Left cardiac atrium (tissue), 4 donors: ENCODE measurements at regions of chr7 and their contacts with region 1.

Region 1: DNA sequence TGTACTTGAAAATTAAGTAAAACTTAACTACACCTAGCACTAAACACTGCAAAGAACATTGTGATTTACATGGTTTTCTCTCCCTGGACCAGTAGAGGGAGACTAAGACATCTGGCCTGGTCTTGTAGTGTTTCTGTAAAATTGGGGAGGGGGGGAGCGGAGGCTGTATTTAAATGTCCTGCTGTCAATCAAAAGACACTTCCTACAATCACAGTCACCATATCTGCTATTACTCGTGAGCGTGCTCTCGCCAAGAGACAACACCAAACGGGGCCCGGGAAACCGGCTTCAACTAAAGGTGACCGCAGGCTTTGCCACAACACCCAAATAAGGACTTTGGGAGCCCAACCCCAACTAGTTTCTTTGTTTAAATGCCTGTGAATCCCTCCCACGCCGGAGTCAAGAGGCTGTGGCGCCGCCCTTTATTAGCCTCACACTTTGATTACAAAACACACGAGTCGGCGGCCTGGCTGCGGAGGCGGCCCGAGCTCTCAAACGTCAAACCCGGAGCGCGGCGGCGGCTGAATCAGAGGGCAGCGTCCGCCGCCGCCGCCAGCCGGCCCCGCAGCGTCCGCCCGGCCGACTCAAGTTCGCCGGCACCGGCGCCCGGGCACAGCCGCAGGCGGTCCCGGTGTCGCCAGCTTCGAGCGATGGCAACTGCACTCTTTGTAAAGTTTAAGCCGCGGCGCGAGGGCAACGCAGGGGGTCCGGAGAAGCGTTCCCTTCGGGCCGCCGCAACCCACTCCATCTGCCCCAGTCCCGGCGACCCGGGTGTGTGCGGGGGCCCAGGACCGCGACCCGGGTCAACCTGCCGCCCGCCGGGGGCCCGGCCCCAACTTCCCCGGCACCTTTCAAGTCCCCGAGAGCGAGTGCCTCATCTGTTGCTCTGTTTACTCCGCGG is 1.3 kb downstream of the KDM7A start:
- DNase-seq: peak; percentile 95
- ATAC-seq: peak; percentile 62 to 77

Region 2: GRCh38 chr7:139696552-139696951 is 478.9 kb before region 1 on chr7:
- intact Hi-C with region 1: no loop called
- DNase-seq: no peak
- ATAC-seq: peak; percentile 35 to 54

Region 3: GRCh38 chr7:140316165-140316661 is 140.7 kb after region 1 on chr7:
- intact Hi-C with region 1: loop called (anchors 5 to 10 kb)
- DNase-seq: peak; percentile 85
- ATAC-seq: peak; percentile 92 to 98

Region 4: DNA sequence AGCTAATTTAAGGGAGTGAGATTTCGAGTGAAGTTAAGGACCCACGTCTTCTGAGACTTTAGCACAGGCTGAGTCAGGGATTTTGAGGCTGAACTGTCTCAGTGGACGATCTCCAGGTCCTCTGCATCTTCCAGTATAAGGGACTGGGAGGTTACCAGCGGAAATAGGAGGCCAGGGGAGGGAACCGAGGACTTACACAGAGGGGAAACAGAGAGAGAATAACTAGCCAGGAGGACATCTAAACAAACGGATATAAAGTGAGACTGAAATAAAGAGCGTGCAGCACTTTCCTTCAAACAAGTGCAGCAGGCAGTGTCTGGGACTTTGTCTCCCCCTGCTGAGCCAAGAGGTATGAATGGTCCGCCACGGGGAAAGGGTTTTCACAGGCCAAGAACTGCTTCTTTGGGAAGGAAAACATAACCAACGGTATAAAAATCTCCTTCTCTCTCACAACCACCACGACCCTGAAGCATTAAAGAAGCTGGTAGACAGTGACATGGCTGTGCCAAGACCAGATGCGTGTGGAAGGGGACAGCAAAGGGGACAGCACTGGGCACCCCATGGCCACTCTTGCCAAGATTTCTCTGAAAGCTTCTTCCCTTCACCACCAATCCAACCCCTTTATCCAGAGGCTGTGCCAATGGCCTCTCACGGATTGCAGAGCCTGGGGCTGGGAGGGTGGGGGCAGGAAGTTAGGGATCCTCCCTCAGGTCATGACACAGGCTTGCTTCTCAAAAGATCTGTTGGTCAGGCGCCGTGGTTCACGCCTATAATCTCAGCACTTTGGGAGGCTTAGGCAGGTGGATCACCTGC is 150.9 kb after region 1 on chr7:
- intact Hi-C with region 1: loop called in 1 of 2 experiments (anchors 10 kb)
- DNase-seq: peak; percentile 63
- ATAC-seq: peak; percentile 90 to 92